ENCODE measurements at regions of chr9 and their contacts with region 1.

Region 1: GRCh38 chr9:96818535-96818934 is 35.8 kb downstream of the ZNF782 start:
- DNase-seq: no peak
- ATAC-seq: no peak
- H3K4me3 ChIP-seq: no peak overlapping the region
- H3K4me3 Mint-ChIP-seq: no peak overlapping the region
- H3K27ac ChIP-seq: no peak overlapping the region
- H3K27ac Mint-ChIP-seq: no peak overlapping the region
- H3K4me1 ChIP-seq: no peaks in the 10 kb centered on the region
- H3K4me1 Mint-ChIP-seq: no peaks in the 10 kb centered on the region
- H3K27me3 ChIP-seq: no peaks in the 10 kb centered on the region
- H3K27me3 Mint-ChIP-seq: no peaks in the 10 kb centered on the region
- CTCF ChIP-seq: no peak

Region 2: GRCh38 chr9:96686548-96687335 is 131.8 kb before region 1 on chr9:
- CTCF ChIA-PET with region 1: no interaction called
- POLR2A ChIA-PET with region 1: no interaction called
- intact Hi-C with region 1: loop called (anchors 10 kb)
- DNase-seq: peak; percentile 91
- ATAC-seq: peak; percentile 97
- H3K4me3 ChIP-seq: peak overlapping the region; percentile 9 to 72 (median 62)
- H3K4me3 Mint-ChIP-seq: peak overlapping the region; percentile 94
- H3K27ac ChIP-seq: peak overlapping the region; percentile 70 to 83
- H3K27ac Mint-ChIP-seq: peak overlapping the region; percentile 80
- H3K4me1 ChIP-seq: peaks cover 0 to 5% of the 10 kb centered on the region in 2 donors
- H3K4me1 Mint-ChIP-seq: peaks cover 6% of the 10 kb centered on the region
- H3K27me3 ChIP-seq: no peaks in the 10 kb centered on the region
- H3K27me3 Mint-ChIP-seq: no peaks in the 10 kb centered on the region
- CTCF ChIP-seq: peak; percentile 70

Region 3: DNA sequence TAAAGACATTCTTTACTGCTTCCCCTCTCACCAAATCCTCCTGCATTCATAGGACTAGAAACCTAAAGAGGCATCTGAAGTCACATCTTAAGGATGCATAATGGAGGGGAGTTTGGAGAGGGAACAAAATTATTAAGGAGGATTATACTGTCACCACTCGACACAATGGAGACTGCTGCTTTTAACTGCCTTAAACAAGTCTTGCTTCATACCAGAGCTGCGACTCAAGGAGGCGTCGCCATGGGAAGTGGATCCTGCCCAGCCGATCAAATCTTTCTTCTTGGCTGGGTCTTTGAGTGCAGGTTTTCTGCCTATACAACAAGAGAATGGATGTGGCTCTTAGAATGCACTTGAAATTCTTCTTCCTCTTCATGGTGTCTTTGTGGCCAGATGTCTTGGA is 967.8 kb after region 1 on chr9:
- CTCF ChIA-PET with region 1: no interaction called
- POLR2A ChIA-PET with region 1: no interaction called
- intact Hi-C with region 1: no loop called
- DNase-seq: no peak
- ATAC-seq: no peak
- H3K4me3 ChIP-seq: no peak overlapping the region
- H3K4me3 Mint-ChIP-seq: no peak overlapping the region
- H3K27ac ChIP-seq: no peak overlapping the region
- H3K27ac Mint-ChIP-seq: no peak overlapping the region
- H3K4me1 ChIP-seq: no peaks in the 10 kb centered on the region
- H3K4me1 Mint-ChIP-seq: no peaks in the 10 kb centered on the region
- H3K27me3 ChIP-seq: peaks cover 0 to 6% (median 3%) of the 10 kb centered on the region in 4 experiments
- H3K27me3 Mint-ChIP-seq: peaks cover 25% of the 10 kb centered on the region
- CTCF ChIP-seq: no peak